Transverse colon (tissue), 4 donors: ENCODE measurements at regions of chr4 and their contacts with region 1.

Region 1: DNA sequence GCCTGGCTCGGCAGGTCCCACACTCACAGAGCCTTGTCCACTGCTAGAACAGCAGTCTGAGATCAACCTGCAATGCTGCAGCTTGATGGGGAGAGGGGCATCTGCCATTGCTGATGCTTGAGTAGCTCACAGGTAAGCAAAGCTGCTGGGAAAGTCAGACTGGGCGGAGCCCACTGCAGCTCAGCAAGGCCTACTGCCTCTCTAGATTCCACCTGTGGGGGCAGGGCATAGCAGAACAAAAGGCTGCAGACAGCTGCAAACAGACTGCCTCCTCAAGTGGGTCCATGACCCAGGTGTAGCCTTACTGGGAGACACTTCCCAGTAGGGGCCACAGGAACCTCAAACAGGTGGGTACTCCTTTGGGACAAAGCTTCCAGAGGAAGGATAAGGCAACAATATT is 110.6 kb upstream of the ADAMTS3 start:
- DNase-seq: no peak
- H3K4me3 ChIP-seq: no peak overlapping the region
- H3K27ac ChIP-seq: no peak overlapping the region
- H3K4me1 ChIP-seq: no peaks in the 10 kb centered on the region
- H3K27me3 ChIP-seq: no peaks in the 10 kb centered on the region
- CTCF ChIP-seq: no peak
- EP300 ChIP-seq: no peak
- POLR2A ChIP-seq: no peak

Region 2: GRCh38 chr4:72489267-72489666 is 190.4 kb before region 1 on chr4:
- in situ Hi-C with region 1: no loop called
- intact Hi-C with region 1: no loop called
- DNase-seq: no peak
- H3K4me3 ChIP-seq: no peak overlapping the region
- H3K27ac ChIP-seq: no peak overlapping the region
- H3K4me1 ChIP-seq: no peaks in the 10 kb centered on the region
- H3K27me3 ChIP-seq: no peaks in the 10 kb centered on the region
- CTCF ChIP-seq: no peak
- EP300 ChIP-seq: no peak
- POLR2A ChIP-seq: no peak

Region 3: GRCh38 chr4:72743078-72743477 is 63.4 kb after region 1 on chr4:
- in situ Hi-C with region 1: no loop called
- intact Hi-C with region 1: loop called (anchors 2 kb)
- DNase-seq: no peak
- H3K4me3 ChIP-seq: no peak overlapping the region
- H3K27ac ChIP-seq: no peak overlapping the region
- H3K4me1 ChIP-seq: no peaks in the 10 kb centered on the region
- H3K27me3 ChIP-seq: no peaks in the 10 kb centered on the region
- CTCF ChIP-seq: no peak
- EP300 ChIP-seq: no peak
- POLR2A ChIP-seq: no peak